K562 (cell line): ENCODE measurements at regions of chr3 and their contacts with region 1.

Region 1: DNA sequence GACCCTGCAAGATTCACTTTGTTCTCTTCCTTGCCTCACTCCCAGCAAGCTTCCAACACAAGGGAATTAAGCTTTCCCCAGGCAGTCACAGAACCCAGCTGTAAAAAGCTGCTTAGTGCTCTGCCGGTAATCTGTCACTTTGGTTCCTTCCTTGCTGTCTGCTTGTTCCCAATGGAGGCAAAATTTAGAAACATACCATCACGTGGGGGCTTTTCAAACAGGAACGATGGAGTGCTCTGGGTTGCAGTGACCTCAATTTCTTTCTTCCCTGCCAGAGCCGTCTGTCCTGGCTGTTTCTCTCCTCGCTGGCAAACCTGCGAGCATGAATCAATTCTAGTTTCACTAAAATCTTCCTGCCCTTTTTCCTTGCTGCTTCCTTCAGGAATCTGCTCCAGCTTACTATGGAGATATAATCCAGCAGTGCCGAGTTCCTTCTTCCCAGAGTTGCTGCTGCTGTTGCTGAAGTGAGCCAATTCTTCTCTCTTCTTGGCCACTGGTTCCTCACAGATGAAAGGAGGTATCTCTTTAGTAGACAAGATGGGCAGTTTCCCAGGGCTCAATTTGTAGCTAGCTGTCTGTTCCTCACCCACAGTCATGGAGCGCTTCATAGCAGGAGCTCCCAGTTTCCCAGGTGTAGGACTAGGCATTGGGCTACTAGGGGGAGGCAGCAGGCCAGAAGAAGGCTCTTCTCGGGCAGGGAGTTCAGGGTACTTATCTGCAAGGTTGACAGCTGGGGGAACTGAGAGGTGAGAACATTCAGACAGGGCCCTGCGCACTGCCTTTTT is 88.1 kb downstream of the DHX30 start:
- DNase-seq: no peak
- ATAC-seq: peak; percentile 29; the same call in 2 of the 3 replicates
- H3K4me3 ChIP-seq: no peak overlapping the region
- H3K27ac ChIP-seq: no peak overlapping the region
- H3K4me1 ChIP-seq: no peaks in the 10 kb centered on the region; a peak in 1 of 5 replicates
- H3K27me3 ChIP-seq: no peaks in the 10 kb centered on the region
- CTCF ChIP-seq: no peak
- EP300 ChIP-seq: no peak
- POLR2A ChIP-seq: no peak
- RAD21 ChIP-seq: no peak

Region 2: DNA sequence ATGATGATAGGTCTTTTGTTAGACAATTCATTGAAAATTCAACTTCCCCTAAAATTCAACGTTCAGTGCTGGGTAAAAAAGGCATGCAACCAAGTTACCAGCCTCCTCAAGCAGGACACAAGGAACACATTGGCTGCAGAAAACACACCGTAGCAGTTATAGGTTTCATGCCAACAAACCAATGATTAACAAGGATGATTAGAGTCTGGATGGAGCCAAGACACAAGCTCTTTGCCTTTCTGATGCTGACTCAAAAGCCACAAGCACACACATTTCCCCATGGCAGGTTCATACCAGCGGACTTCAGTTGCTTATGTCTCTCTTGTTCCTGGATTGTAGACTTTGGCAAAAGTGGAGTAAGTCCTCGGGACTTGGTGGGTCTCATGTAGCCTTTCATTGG is 17.7 kb after region 1 on chr3:
- CTCF ChIA-PET with region 1: no interaction called
- POLR2A ChIA-PET with region 1: interaction called, 14 read pairs
- in situ Hi-C with region 1: no loop called
- intact Hi-C with region 1: no loop called
- DNase-seq: no peak
- ATAC-seq: no peak
- H3K4me3 ChIP-seq: no peak overlapping the region
- H3K27ac ChIP-seq: no peak overlapping the region
- H3K4me1 ChIP-seq: peaks cover 6 to 17% of the 10 kb centered on the region in 2 experiments; a peak in 3 of 5 replicates
- H3K27me3 ChIP-seq: no peaks in the 10 kb centered on the region
- CTCF ChIP-seq: no peak
- EP300 ChIP-seq: no peak
- POLR2A ChIP-seq: no peak
- RAD21 ChIP-seq: no peak